HepG2 (cell line): ENCODE measurements at regions of chr3 and their contacts with region 1.

Region 1: GRCh38 chr3:94004301-94004910 is 24.0 kb downstream of the STX19 start:
- DNase-seq: peak; percentile 60
- ATAC-seq: peak; percentile 67
- H3K4me3 ChIP-seq: 0 out of 6 replicates have a peak overlapping the region, but pooled peaks of 1 of the 3 experiments have one; percentile 31
- H3K27ac ChIP-seq: peak overlapping the region; percentile 11
- H3K4me1 ChIP-seq: no peaks in the 10 kb centered on the region
- H3K27me3 ChIP-seq: no peaks in the 10 kb centered on the region
- CTCF ChIP-seq: peak; percentile 81
- EP300 ChIP-seq: no peak
- POLR2A ChIP-seq: no peak
- RAD21 ChIP-seq: no peak

Region 2: DNA sequence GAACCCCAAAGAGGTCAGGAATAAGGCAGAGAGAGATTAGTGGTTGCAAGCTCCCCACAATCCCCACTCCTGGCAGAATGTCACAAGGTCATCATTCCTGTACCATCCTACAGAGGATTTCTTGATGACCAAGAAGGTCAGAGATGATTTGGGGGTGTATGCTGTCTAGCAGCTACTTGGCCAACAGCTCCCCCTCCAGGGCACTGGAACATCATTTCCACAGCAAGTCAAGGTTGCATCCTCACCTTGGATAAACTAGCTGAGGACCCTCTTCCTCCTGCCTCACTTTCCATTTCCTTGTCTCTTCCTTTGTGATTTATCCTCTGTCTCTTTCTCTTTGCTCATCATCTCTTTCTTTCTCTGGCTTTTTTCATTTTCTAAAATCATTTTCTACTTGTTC is 137.0 kb before region 1 on chr3:
- CTCF ChIA-PET with region 1: no interaction called
- POLR2A ChIA-PET with region 1: no interaction called
- in situ Hi-C with region 1: no loop called
- intact Hi-C with region 1: no loop called
- DNase-seq: no peak
- ATAC-seq: no peak
- H3K4me3 ChIP-seq: no peak overlapping the region
- H3K27ac ChIP-seq: no peak overlapping the region
- H3K4me1 ChIP-seq: no peaks in the 10 kb centered on the region
- H3K27me3 ChIP-seq: no peaks in the 10 kb centered on the region
- CTCF ChIP-seq: no peak
- EP300 ChIP-seq: no peak
- POLR2A ChIP-seq: no peak
- RAD21 ChIP-seq: no peak

Region 3: GRCh38 chr3:94069194-94069813 is 64.9 kb after region 1 on chr3:
- CTCF ChIA-PET with region 1: interaction called, 25 read pairs
- POLR2A ChIA-PET with region 1: no interaction called
- in situ Hi-C with region 1: loop called (anchors 10 kb)
- intact Hi-C with region 1: loop called (anchors 1 kb)
- DNase-seq: peak; percentile 3
- ATAC-seq: no peak
- H3K4me3 ChIP-seq: no peak overlapping the region
- H3K27ac ChIP-seq: no peak overlapping the region
- H3K4me1 ChIP-seq: peaks cover 9% of the 10 kb centered on the region
- H3K27me3 ChIP-seq: no peaks in the 10 kb centered on the region
- CTCF ChIP-seq: peak; percentile 39
- EP300 ChIP-seq: no peak
- POLR2A ChIP-seq: no peak
- RAD21 ChIP-seq: no peak

Region 4: GRCh38 chr3:94187697-94188096 is 183.3 kb after region 1 on chr3:
- CTCF ChIA-PET with region 1: no interaction called
- POLR2A ChIA-PET with region 1: no interaction called
- in situ Hi-C with region 1: no loop called
- intact Hi-C with region 1: no loop called
- DNase-seq: no peak
- ATAC-seq: no peak
- H3K4me3 ChIP-seq: no peak overlapping the region
- H3K27ac ChIP-seq: no peak overlapping the region
- H3K4me1 ChIP-seq: no peaks in the 10 kb centered on the region
- H3K27me3 ChIP-seq: no peaks in the 10 kb centered on the region
- CTCF ChIP-seq: no peak
- EP300 ChIP-seq: no peak
- POLR2A ChIP-seq: no peak
- RAD21 ChIP-seq: no peak